CD8-positive, alpha-beta T cell (primary cell): ENCODE measurements at regions of chr16 and their contacts with region 1.

Region 1: DNA sequence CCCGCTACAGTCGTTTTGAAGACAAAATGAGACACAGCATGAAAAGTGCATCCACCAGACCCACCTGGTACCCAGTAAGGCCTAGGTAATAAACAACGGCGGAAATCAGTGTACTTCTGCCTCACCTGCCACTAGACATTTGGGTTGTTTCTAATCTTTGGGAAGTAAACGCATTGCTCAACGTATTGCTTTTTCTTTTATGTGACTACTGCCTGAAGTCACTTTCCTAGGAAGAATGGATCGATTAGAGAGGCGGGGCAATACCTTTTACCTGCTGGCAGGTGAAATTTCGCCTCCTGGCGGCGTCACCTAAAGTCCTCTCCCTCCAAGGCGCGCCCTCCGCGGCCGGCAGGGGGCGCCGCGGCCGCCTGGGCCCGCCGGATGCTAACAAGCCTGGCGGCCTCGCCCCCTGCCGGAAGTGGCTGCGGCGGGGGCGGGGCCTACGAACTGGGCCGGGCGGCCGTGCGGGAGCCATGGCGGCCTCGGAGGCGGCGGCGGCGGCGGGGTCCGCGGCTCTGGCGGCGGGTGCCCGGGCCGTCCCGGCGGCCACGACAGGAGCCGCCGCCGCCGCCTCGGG is at the start of gene ATMIN:
- DNase-seq: peak; percentile 79 to 94 (median 90)
- ATAC-seq: peak; percentile 97
- H3K4me3 ChIP-seq: peak within 1 kb of the TSS; percentile 47 to 59
- H3K4me3 Mint-ChIP-seq: peak within 1 kb of the TSS; percentile 87
- H3K27ac ChIP-seq: peak within 1 kb of the TSS in 1 of 2 experiments; percentile 34
- H3K27ac Mint-ChIP-seq: peak within 1 kb of the TSS; percentile 82
- H3K4me1 ChIP-seq: peaks cover 20% of the 10 kb centered on the region
- H3K4me1 Mint-ChIP-seq: peaks cover 34% of the 10 kb centered on the region
- H3K27me3 ChIP-seq: no peaks in the 10 kb centered on the region
- H3K27me3 Mint-ChIP-seq: no peaks in the 10 kb centered on the region
- CTCF ChIP-seq: peak; percentile 99
- total RNA-seq, gene ATMIN: 32.2 to 35.1 TPM

Region 2: GRCh38 chr16:81095953-81096717 is 60.6 kb after region 1 on chr16 and contains the start of gene GCSH:
- CTCF ChIA-PET with region 1: interaction called, 4 read pairs
- POLR2A ChIA-PET with region 1: interaction called, 3 read pairs
- intact Hi-C with region 1: loop called (anchors 1 kb)
- DNase-seq: peak; percentile 94 to 100 (median 98)
- ATAC-seq: peak; percentile 97
- H3K4me3 ChIP-seq: peak within 1 kb of the TSS; percentile 59 to 71
- H3K4me3 Mint-ChIP-seq: peak within 1 kb of the TSS; percentile 88
- H3K27ac ChIP-seq: peak within 1 kb of the TSS; percentile 43 to 58
- H3K27ac Mint-ChIP-seq: peak within 1 kb of the TSS; percentile 49
- H3K4me1 ChIP-seq: peaks cover 7% of the 10 kb centered on the region
- H3K4me1 Mint-ChIP-seq: peaks cover 14% of the 10 kb centered on the region
- H3K27me3 ChIP-seq: no peaks in the 10 kb centered on the region
- H3K27me3 Mint-ChIP-seq: no peaks in the 10 kb centered on the region
- CTCF ChIP-seq: no peak
- total RNA-seq, gene GCSH: 2.5 to 2.8 TPM

Region 3: GRCh38 chr16:81140930-81141780 is 105.7 kb after region 1 on chr16:
- CTCF ChIA-PET with region 1: no interaction called
- POLR2A ChIA-PET with region 1: no interaction called
- intact Hi-C with region 1: no loop called
- DNase-seq: no peak
- ATAC-seq: no peak
- H3K4me3 ChIP-seq: no peak overlapping the region
- H3K4me3 Mint-ChIP-seq: no peak overlapping the region
- H3K27ac ChIP-seq: no peak overlapping the region
- H3K27ac Mint-ChIP-seq: no peak overlapping the region
- H3K4me1 ChIP-seq: no peaks in the 10 kb centered on the region
- H3K4me1 Mint-ChIP-seq: no peaks in the 10 kb centered on the region
- H3K27me3 ChIP-seq: no peaks in the 10 kb centered on the region
- H3K27me3 Mint-ChIP-seq: peaks cover 12% of the 10 kb centered on the region
- CTCF ChIP-seq: no peak